A549 (cell line): ENCODE measurements at regions of chr10 and their contacts with region 1.

Region 1: DNA sequence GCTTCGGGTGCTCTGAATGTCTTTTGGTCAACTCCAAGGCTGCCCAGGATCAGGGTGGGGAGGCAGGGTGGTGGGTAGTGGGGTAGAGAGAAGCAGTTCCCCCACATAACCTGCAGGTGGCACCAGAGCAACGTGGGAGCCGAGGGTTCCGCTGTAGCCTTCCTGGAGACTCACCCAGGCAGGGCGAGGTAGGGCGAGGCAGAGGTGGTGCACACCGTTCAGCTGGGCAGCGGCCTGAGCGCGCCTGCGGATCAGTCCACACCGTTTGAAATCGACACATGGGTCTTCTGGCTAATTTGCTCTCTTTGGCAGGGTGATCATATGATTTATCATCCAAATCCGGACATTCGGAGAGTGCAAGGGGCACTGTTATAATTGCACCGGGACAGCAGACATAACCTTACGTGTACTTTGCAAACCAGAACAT is 41.4 kb upstream of the MAP3K8 start:
- DNase-seq: peak; percentile 79 to 91
- ATAC-seq: peak; percentile 98 to 100
- H3K4me3 ChIP-seq: no peak overlapping the region
- H3K27ac ChIP-seq: peak overlapping the region; percentile 55 to 72; a peak in 4 of 6 replicates
- H3K4me1 ChIP-seq: peaks cover 7% of the 10 kb centered on the region; the same call in 1 of the 3 replicates
- CTCF ChIP-seq: peak; percentile 94
- EP300 ChIP-seq: no peak
- POLR2A ChIP-seq: no peak
- RAD21 ChIP-seq: peak; percentile 98 to 99

Region 2: GRCh38 chr10:30300728-30301127 is 91.8 kb before region 1 on chr10:
- CTCF ChIA-PET with region 1: no interaction called
- POLR2A ChIA-PET with region 1: no interaction called
- DNase-seq: no peak
- ATAC-seq: no peak
- H3K4me3 ChIP-seq: no peak overlapping the region
- H3K27ac ChIP-seq: no peak overlapping the region
- H3K4me1 ChIP-seq: no peaks in the 10 kb centered on the region
- CTCF ChIP-seq: no peak
- EP300 ChIP-seq: no peak
- POLR2A ChIP-seq: no peak
- RAD21 ChIP-seq: no peak

Region 3: DNA sequence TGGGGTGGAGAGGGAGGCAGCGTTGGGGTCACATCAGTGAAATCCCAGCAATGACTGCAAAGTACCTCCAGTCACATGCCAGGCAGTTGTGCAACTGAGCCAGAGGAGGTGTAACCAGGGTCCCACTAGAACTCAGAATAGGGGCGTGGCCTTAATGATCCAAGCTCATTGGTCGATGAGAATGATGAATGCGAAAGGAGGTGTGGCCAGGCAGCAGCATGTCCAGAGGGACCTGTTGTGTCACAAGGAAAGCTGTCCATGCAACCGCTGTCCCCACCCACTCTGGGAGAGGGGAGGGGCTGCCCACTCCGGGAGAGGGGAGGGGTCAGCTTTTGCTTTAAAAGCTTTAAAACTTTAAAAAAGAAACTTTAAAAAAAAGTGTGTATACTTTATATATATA is 18.2 kb before region 1 on chr10:
- CTCF ChIA-PET with region 1: interaction called, 13 read pairs
- POLR2A ChIA-PET with region 1: no interaction called
- DNase-seq: peak in 1 of 2 experiments; percentile 60
- ATAC-seq: peak in 1 of 2 experiments; percentile 63; a peak in 3 of 6 replicates
- H3K4me3 ChIP-seq: no peak overlapping the region
- H3K27ac ChIP-seq: no peak overlapping the region
- H3K4me1 ChIP-seq: peaks cover 4% of the 10 kb centered on the region; the same call in 1 of the 3 replicates
- CTCF ChIP-seq: no peak
- EP300 ChIP-seq: no peak
- POLR2A ChIP-seq: no peak
- RAD21 ChIP-seq: no peak

Region 4: GRCh38 chr10:30413996-30414576 is 21.5 kb after region 1 on chr10:
- CTCF ChIA-PET with region 1: interaction called, 21 read pairs
- POLR2A ChIA-PET with region 1: no interaction called
- DNase-seq: peak; percentile 80 to 84
- ATAC-seq: peak; percentile 80 to 85
- H3K4me3 ChIP-seq: no peak overlapping the region
- H3K27ac ChIP-seq: peak overlapping the region; percentile 27 to 63; a peak in 4 of 6 replicates
- H3K4me1 ChIP-seq: peaks cover 17% of the 10 kb centered on the region
- CTCF ChIP-seq: peak; percentile 76
- EP300 ChIP-seq: no peak
- POLR2A ChIP-seq: no peak
- RAD21 ChIP-seq: peak; percentile 84

Region 5: DNA sequence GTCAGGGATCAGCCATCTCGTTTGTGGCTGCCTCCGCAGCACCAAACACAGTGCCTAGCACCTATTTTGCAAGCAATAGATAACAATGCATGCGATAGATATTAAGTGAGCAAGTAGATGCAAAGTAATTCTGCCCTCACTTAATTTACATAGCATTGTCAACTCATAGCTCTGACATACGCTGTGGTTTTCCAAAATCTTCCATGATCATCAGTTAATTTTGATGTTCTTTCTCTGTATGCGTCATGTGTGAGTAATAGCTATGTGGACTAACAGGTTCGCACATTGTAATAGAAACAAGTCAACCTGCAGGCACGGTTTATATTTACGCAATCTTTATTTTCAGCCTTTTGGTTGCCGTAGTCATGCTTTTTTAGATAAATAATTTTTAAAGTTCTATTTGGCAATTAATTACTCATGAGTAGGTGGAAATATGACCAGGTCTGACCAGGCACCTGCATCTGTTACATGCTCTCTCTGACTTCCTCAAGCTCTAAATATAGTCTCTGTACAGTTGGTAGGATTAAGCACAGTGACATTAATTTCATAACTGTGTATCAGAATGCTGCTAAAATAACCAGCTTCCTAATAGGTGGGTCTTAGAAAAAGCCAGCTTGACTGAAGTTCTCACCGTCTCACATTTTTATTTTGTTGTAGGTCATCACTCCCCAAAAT is 54.7 kb after region 1 on chr10:
- CTCF ChIA-PET with region 1: interaction called, 11 read pairs
- POLR2A ChIA-PET with region 1: no interaction called
- DNase-seq: no peak
- ATAC-seq: no peak
- H3K4me3 ChIP-seq: no peak overlapping the region
- H3K27ac ChIP-seq: no peak overlapping the region
- H3K4me1 ChIP-seq: peaks cover 6% of the 10 kb centered on the region; the same call in 1 of the 3 replicates
- CTCF ChIP-seq: no peak
- EP300 ChIP-seq: no peak
- POLR2A ChIP-seq: no peak
- RAD21 ChIP-seq: no peak

Region 6: DNA sequence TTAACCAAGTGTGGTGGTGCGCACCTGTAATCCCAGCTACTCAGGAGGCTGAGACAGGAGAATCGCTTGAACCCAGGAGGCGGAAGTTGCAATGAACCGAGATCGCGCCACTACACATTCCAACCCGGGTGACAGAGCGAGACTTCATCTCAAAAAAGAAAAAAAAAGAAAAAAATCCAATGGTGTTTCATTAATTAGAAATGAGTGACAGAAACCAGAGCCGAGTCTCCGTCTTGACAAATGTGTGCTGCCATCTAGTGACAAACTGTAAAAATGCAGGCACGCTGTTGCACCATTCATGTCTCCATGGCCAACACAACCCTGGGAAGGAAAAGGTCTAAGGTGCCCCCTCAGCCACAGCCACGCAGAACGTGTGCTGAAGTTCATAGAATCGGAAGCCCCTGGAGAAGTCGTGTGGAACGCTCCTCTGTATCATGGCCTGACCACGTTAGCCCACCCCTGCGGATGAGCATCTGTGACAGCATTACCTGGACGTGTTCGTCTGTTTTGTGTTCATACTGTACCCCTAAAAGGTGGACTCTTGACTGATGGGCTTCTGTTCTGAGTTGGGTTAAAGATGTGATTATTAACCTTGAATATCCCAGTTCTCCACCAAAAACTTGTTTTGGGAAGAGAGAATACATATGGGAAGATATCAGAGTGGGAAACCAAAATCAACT is 142.0 kb after region 1 on chr10:
- CTCF ChIA-PET with region 1: interaction called, 31 read pairs
- POLR2A ChIA-PET with region 1: no interaction called
- DNase-seq: peak; percentile 61 to 85
- ATAC-seq: peak; percentile 41 to 58; a peak in 3 of 6 replicates
- H3K4me3 ChIP-seq: no peak overlapping the region
- H3K27ac ChIP-seq: peak overlapping the region; percentile 78 to 88
- H3K4me1 ChIP-seq: peaks cover 61% of the 10 kb centered on the region
- CTCF ChIP-seq: peak; percentile 84
- EP300 ChIP-seq: no peak
- POLR2A ChIP-seq: no peak
- RAD21 ChIP-seq: peak; percentile 89 to 91